B cell (primary cell): ENCODE measurements at regions of chr11 and their contacts with region 1.

Region 1: GRCh38 chr11:113875234-113876073 is at the start of gene USP28:
- DNase-seq: peak; percentile 92
- ATAC-seq: peak; percentile 90
- H3K4me3 ChIP-seq: peak within 1 kb of the TSS; percentile 61 to 90 (median 80)
- H3K4me3 Mint-ChIP-seq: peak within 1 kb of the TSS; percentile 98
- H3K27ac ChIP-seq: peak within 1 kb of the TSS; percentile 78 to 87
- H3K27ac Mint-ChIP-seq: peak within 1 kb of the TSS; percentile 98
- H3K4me1 ChIP-seq: peaks cover 33 to 51% of the 10 kb centered on the region in 2 donors
- H3K4me1 Mint-ChIP-seq: peaks cover 59% of the 10 kb centered on the region
- H3K27me3 ChIP-seq: no peaks in the 10 kb centered on the region
- H3K27me3 Mint-ChIP-seq: no peaks in the 10 kb centered on the region
- CTCF ChIP-seq: peak; percentile 25
- total RNA-seq, gene USP28: 104 and 112 TPM in 2 replicates

Region 2: DNA sequence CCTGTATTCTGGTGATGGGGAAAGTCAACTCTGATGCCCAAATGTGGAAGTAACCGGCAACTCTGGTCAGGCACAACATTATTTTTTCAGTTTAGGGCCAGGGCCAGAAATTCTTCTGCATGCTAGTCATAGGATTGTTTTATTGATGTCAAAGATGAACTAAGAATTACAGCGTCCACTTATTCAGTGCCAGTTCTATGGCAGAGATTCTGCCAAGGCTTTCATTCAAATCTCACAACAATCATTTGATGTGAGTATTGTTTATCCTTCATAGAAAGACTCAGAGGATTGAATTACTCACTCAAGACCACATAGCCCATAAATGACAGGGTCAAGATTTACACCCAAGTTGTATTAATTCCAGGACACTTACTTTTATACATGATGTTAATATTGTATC is 257.1 kb before region 1 on chr11:
- CTCF ChIA-PET with region 1: no interaction called
- POLR2A ChIA-PET with region 1: no interaction called
- intact Hi-C with region 1: no loop called
- DNase-seq: no peak
- ATAC-seq: no peak
- H3K4me3 ChIP-seq: no peak overlapping the region
- H3K4me3 Mint-ChIP-seq: no peak overlapping the region
- H3K27ac ChIP-seq: no peak overlapping the region
- H3K27ac Mint-ChIP-seq: no peak overlapping the region
- H3K4me1 ChIP-seq: no peaks in the 10 kb centered on the region
- H3K4me1 Mint-ChIP-seq: peaks cover 6% of the 10 kb centered on the region
- H3K27me3 ChIP-seq: no peaks in the 10 kb centered on the region
- H3K27me3 Mint-ChIP-seq: peaks cover 16% of the 10 kb centered on the region
- CTCF ChIP-seq: no peak

Region 3: GRCh38 chr11:113781679-113782078 is 93.8 kb before region 1 on chr11:
- CTCF ChIA-PET with region 1: no interaction called
- POLR2A ChIA-PET with region 1: no interaction called
- intact Hi-C with region 1: no loop called
- DNase-seq: no peak
- ATAC-seq: no peak
- H3K4me3 ChIP-seq: no peak overlapping the region
- H3K4me3 Mint-ChIP-seq: no peak overlapping the region
- H3K27ac ChIP-seq: no peak overlapping the region
- H3K27ac Mint-ChIP-seq: no peak overlapping the region
- H3K4me1 ChIP-seq: no peaks in the 10 kb centered on the region
- H3K4me1 Mint-ChIP-seq: no peaks in the 10 kb centered on the region
- H3K27me3 ChIP-seq: peaks cover 0 to 11% (median 1%) of the 10 kb centered on the region in 4 experiments
- H3K27me3 Mint-ChIP-seq: peaks cover 42% of the 10 kb centered on the region
- CTCF ChIP-seq: no peak

Region 4: GRCh38 chr11:113806406-113806805 is 69.0 kb before region 1 on chr11:
- CTCF ChIA-PET with region 1: interaction called, 14 read pairs
- POLR2A ChIA-PET with region 1: no interaction called
- intact Hi-C with region 1: no loop called
- DNase-seq: peak; percentile 56
- ATAC-seq: peak; percentile 70
- H3K4me3 ChIP-seq: no peak overlapping the region
- H3K4me3 Mint-ChIP-seq: no peak overlapping the region
- H3K27ac ChIP-seq: no peak overlapping the region
- H3K27ac Mint-ChIP-seq: peak overlapping the region; percentile 77
- H3K4me1 ChIP-seq: no peaks in the 10 kb centered on the region
- H3K4me1 Mint-ChIP-seq: peaks cover 4% of the 10 kb centered on the region
- H3K27me3 ChIP-seq: no peaks in the 10 kb centered on the region
- H3K27me3 Mint-ChIP-seq: no peaks in the 10 kb centered on the region
- CTCF ChIP-seq: peak; percentile 58

Region 5: GRCh38 chr11:113831314-113831713 is 44.1 kb before region 1 on chr11:
- CTCF ChIA-PET with region 1: interaction called, 7 read pairs
- POLR2A ChIA-PET with region 1: no interaction called
- intact Hi-C with region 1: loop called (anchors 10 kb)
- DNase-seq: peak; percentile 52
- ATAC-seq: peak; percentile 86
- H3K4me3 ChIP-seq: peak overlapping the region in 2 of 5 experiments; percentile 12 to 18
- H3K4me3 Mint-ChIP-seq: peak overlapping the region; percentile 78
- H3K27ac ChIP-seq: peak overlapping the region; percentile 36 to 65
- H3K27ac Mint-ChIP-seq: peak overlapping the region; percentile 86
- H3K4me1 ChIP-seq: peaks cover 15 to 19% of the 10 kb centered on the region in 2 donors
- H3K4me1 Mint-ChIP-seq: peaks cover 24% of the 10 kb centered on the region
- H3K27me3 ChIP-seq: no peaks in the 10 kb centered on the region
- H3K27me3 Mint-ChIP-seq: no peaks in the 10 kb centered on the region
- CTCF ChIP-seq: no peak

Region 6: DNA sequence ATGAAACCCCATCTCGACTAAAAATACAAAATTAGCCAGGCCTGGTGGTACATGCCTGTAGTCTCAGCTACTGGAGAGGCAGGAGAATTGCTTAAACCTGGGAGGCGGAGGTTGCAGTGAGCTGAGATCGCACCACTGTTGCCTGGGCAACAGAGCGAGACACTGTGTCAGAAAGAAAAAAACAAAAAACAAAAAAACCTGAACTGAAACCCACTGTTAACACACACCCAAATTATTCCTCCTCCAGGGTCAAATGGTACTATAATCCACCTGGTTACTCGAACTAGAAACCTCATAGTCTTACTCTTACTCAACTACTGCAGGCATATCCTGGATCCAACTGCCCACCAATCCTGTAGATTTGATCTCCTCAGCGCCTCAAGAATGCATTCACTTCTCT is 35.6 kb before region 1 on chr11:
- CTCF ChIA-PET with region 1: interaction called, 4 read pairs
- POLR2A ChIA-PET with region 1: interaction called, 10 read pairs
- intact Hi-C with region 1: loop called (anchors 1 kb)
- DNase-seq: peak; percentile 85
- ATAC-seq: peak; percentile 93
- H3K4me3 ChIP-seq: peak overlapping the region in 1 of 5 experiments; percentile 52
- H3K4me3 Mint-ChIP-seq: peak overlapping the region; percentile 78
- H3K27ac ChIP-seq: peak overlapping the region; percentile 92
- H3K27ac Mint-ChIP-seq: peak overlapping the region; percentile 94
- H3K4me1 ChIP-seq: peaks cover 39 to 43% of the 10 kb centered on the region in 2 donors
- H3K4me1 Mint-ChIP-seq: peaks cover 30% of the 10 kb centered on the region
- H3K27me3 ChIP-seq: no peaks in the 10 kb centered on the region
- H3K27me3 Mint-ChIP-seq: no peaks in the 10 kb centered on the region
- CTCF ChIP-seq: no peak

Region 7: DNA sequence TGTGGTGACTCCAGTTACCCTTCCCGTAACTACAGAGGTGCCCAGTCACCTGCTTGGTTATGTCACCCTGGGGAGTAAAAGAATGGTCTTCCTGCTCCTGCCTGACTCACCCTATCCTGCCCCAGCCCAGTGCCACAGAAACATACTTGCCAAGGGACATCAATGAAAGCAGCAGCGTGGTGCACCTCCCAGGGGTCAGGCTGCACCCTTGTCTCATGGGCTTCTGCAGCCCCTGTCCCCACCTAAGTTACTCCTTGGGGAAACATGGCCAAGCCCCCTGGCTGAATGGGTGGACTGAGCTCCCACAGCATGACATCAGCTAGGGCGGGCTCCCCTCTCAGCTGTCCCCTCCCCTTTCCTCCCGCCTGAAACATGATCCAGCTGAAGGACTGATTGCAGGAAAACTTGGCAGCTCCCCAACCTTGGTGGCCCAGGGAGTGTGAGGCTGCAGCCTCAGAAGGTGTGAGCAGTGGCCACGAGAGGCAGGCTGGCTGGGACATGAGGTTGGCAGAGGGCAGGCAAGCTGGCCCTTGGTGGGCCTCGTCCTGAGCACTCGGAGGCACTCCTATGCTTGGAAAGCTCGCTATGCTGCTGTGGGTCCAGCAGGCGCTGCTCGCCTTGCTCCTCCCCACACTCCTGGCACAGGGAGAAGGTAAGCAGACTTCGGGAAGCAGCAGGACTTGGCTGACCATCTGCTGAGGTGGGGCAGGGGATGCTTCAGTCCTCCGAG is 99.5 kb after region 1 on chr11 and contains the start of gene HTR3A:
- CTCF ChIA-PET with region 1: interaction called, 3 read pairs
- POLR2A ChIA-PET with region 1: no interaction called
- intact Hi-C with region 1: loop called (anchors 1 kb)
- DNase-seq: peak; percentile 16
- ATAC-seq: no peak
- H3K4me3 ChIP-seq: no peak within 1 kb of the TSS
- H3K4me3 Mint-ChIP-seq: peak within 1 kb of the TSS; percentile 48
- H3K27ac ChIP-seq: peak within 1 kb of the TSS in 1 of 2 donors; percentile 29
- H3K27ac Mint-ChIP-seq: peak within 1 kb of the TSS; percentile 91
- H3K4me1 ChIP-seq: peaks cover 56 to 77% of the 10 kb centered on the region in 2 donors
- H3K4me1 Mint-ChIP-seq: peaks cover 66% of the 10 kb centered on the region
- H3K27me3 ChIP-seq: no peaks in the 10 kb centered on the region
- H3K27me3 Mint-ChIP-seq: no peaks in the 10 kb centered on the region
- CTCF ChIP-seq: no peak
- total RNA-seq, gene HTR3A: 13.8 and 16.1 TPM in 2 replicates

Region 8: DNA sequence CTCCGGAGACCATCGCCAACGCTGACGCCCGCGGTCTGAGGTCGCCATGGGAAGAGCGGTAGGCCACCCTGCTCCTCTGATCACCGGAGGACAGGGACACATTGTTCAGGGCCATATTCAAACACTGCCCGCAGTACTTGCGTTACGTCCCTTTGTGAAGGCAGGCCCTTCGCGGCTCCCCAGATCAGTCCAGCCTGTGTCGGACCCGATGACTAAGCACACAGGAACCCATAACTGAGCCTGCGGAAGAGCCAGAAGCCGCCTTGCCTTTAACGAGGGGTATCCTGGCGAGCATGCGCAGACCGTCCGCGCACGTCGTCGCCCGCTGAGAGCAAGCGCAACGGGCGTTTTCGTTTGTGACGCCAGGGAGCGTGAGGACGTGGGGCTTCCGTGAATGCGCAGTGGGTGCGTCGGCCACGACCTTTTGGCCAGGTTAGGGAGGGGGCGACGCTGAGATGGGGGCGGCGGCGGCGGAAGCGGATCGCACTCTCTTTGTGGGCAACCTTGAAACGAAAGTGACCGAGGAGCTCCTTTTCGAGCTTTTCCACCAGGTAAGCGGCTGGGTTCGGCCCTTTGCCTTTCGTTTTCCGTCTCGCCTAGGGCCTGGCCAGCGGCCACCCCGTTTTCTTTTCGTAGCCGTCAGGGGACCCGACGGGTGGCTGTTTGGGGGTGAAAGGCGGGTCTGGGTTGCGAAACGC is 524.9 kb after region 1 on chr11 and contains the starts of genes C11orf71 and RBM7:
- CTCF ChIA-PET with region 1: no interaction called
- POLR2A ChIA-PET with region 1: no interaction called
- intact Hi-C with region 1: loop called (anchors 1 kb)
- DNase-seq: peak; percentile 99
- ATAC-seq: peak; percentile 94
- H3K4me3 ChIP-seq: peak within 1 kb of the TSS; percentile 72 to 98 (median 89)
- H3K4me3 Mint-ChIP-seq: peak within 1 kb of the TSS; percentile 99
- H3K27ac ChIP-seq: peak within 1 kb of the TSS; percentile 87 to 92
- H3K27ac Mint-ChIP-seq: peak within 1 kb of the TSS; percentile 98
- H3K4me1 ChIP-seq: peaks cover 21 to 28% of the 10 kb centered on the region in 2 donors
- H3K4me1 Mint-ChIP-seq: peaks cover 45% of the 10 kb centered on the region
- H3K27me3 ChIP-seq: no peaks in the 10 kb centered on the region
- H3K27me3 Mint-ChIP-seq: no peaks in the 10 kb centered on the region
- CTCF ChIP-seq: no peak
- total RNA-seq, gene C11orf71: 14.8 and 14.9 TPM in 2 replicates
- total RNA-seq, gene RBM7: 34.8 and 36.1 TPM in 2 replicates